Aorta (tissue), 5 donors: ENCODE measurements at regions of chr9 and their contacts with region 1.

Region 1: DNA sequence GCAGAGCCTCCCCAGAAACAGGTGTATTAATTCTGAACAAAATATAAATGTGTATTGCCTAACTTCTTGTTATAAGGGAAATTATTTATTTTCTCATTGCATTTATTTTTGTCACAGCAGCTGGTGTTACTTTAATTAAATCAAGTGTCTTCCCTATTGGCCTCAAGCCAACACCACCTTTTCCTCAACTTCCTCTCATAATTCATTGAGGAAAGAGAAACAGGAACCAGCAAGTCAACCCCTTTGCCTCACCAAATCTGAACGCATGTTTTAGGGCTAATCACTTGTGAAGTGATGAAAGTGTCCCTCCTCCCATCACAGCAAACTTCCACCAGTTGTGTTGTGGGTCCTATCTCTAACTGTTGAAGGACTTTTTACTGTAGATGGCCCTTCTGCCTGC is 73.1 kb downstream of the DIRAS2 start:
- DNase-seq: no peak
- ATAC-seq: no peak
- H3K4me3 ChIP-seq: no peak overlapping the region
- H3K27ac ChIP-seq: no peak overlapping the region
- H3K4me1 ChIP-seq: no peaks in the 10 kb centered on the region
- H3K27me3 ChIP-seq: no peaks in the 10 kb centered on the region

Region 2: DNA sequence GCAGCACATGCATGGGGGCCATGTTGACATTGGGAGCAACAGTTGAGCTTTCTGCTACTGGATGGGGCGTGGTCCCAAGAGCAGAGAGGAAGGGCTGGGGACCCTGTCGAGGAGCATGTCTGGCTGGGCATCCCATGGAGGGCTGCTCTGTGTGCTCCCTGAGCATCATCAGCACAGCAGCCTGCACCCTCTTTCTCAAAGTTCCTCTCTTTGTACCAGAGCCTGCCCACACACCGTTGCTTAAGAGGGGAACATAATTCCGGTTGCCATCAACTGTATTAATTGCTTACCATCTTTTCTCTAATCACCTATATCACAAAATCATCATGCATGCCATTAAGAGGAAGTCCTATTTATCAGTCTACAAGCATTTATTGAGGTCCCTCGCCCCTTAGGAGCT is 128.3 kb after region 1 on chr9:
- intact Hi-C with region 1: no loop called
- DNase-seq: no peak
- ATAC-seq: no peak
- H3K4me3 ChIP-seq: no peak overlapping the region
- H3K27ac ChIP-seq: no peak overlapping the region
- H3K4me1 ChIP-seq: no peaks in the 10 kb centered on the region
- H3K27me3 ChIP-seq: no peaks in the 10 kb centered on the region

Region 3: DNA sequence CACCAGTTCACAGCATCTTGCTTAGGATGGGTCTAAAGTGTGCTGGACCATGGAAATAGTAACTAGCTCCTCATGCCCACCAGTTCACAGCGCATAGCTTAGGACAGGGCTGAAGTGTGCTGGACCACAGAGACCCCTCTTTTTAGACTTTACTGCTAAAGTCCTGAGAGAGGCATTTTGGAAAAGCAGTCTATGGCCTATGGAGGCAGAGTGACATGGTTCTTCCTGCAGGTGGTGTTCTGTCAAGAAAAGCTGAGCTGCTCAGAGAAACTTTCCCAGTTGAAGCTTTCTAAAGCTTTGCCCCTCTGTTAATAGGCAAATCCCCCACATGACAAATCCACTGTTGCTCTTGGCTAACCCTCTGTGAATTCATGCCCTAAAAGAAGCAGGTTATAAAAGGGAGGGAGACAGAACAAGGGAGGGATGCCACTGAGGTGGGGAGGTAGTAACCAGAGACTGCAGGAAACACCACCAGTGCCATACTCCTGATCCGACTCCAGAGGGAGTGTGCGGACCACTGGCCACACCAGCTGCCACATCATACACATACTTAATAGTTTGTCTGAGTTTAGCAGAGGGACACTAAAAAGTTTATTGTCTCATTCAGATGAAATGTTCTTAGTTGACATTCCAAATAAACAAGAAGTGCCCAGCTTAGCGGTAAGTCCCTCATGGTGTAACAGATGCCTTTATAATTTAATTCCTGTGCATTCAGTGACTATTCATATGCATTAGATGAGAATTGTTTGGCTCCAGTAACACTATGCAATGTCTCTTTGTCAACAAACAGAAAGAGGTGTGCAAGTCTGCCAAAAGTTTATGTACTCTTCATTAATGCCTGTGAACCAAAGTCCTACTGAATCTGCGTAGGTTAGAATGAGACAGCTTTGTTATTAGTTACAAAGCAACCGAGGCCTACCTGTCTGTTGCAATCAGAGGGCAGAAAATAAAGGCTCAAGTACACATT is 1090.3 kb after region 1 on chr9:
- intact Hi-C with region 1: loop called in 1 of 2 experiments (anchors 10 kb)
- DNase-seq: no peak
- ATAC-seq: no peak
- H3K4me3 ChIP-seq: no peak overlapping the region
- H3K27ac ChIP-seq: no peak overlapping the region
- H3K4me1 ChIP-seq: no peaks in the 10 kb centered on the region
- H3K27me3 ChIP-seq: no peaks in the 10 kb centered on the region